Panc1 (cell line): ENCODE measurements at regions of chr5 and their contacts with region 1.

Region 1: DNA sequence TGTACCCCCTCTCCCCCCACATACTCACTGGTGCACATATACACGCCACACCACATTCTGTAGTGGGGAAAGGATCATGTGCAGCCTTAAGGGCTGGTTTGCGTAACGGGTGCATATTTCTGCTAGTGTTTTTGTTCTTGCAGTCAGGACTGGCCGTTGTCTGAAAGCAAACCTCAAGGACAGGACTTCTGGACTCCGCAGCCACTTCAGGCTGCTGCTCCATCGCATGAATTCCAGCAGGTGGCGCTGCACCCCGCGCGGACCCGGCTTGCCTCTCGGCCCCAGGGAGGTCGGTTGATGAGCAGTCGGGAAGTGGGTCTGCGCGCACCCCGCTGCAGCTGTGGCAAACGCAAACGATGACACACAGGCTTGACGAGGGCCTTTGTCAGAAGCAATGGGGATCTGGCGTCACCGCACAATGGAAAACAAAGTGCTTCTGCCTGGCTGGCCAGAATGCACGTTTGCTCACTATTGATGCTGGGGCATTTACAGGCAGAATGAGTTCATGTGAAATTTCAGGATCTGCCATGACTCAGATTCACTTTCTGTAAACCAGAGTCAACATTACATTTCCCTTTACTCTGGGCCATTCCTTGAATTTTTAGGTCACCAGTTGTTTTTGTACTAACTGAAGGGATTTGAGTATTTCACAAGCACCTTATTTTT is 36.3 kb upstream of the GLRX start:
- DNase-seq: peak; percentile 96
- ATAC-seq: peak; percentile 96
- H3K4me3 ChIP-seq: peak overlapping the region; percentile 24 to 50
- H3K27ac ChIP-seq: peak overlapping the region; percentile 44; the same call in 1 of the 2 replicates
- H3K4me1 ChIP-seq: peaks cover 10% of the 10 kb centered on the region; the same call in 1 of the 2 replicates
- H3K27me3 ChIP-seq: no peaks in the 10 kb centered on the region
- CTCF ChIP-seq: peak; percentile 98

Region 2: DNA sequence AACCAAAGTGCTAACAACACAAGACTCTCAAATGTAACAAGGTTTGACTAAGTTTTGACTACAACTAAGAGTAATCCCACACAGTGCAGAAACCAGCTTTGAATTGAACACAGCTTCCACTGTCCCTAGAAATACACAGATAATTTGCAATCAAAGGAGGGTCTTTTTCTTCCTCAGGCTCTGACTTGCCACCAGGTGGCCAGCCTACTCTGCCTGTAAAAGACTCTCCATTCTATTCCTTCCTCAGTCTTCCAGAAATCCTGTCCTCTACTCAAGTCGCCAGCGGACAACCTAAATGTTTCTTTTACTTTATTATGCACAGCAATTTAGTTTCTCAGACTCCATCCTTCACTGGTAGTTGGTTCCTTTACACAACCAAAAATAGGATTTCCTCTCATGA is 541.7 kb before region 1 on chr5:
- CTCF ChIA-PET with region 1: no interaction called
- POLR2A ChIA-PET with region 1: no interaction called
- in situ Hi-C with region 1: no loop called
- intact Hi-C with region 1: no loop called
- DNase-seq: no peak
- ATAC-seq: no peak
- H3K4me3 ChIP-seq: no peak overlapping the region
- H3K27ac ChIP-seq: no peak overlapping the region
- H3K4me1 ChIP-seq: no peaks in the 10 kb centered on the region
- H3K27me3 ChIP-seq: peaks cover 7% of the 10 kb centered on the region
- CTCF ChIP-seq: peak; percentile 31

Region 3: DNA sequence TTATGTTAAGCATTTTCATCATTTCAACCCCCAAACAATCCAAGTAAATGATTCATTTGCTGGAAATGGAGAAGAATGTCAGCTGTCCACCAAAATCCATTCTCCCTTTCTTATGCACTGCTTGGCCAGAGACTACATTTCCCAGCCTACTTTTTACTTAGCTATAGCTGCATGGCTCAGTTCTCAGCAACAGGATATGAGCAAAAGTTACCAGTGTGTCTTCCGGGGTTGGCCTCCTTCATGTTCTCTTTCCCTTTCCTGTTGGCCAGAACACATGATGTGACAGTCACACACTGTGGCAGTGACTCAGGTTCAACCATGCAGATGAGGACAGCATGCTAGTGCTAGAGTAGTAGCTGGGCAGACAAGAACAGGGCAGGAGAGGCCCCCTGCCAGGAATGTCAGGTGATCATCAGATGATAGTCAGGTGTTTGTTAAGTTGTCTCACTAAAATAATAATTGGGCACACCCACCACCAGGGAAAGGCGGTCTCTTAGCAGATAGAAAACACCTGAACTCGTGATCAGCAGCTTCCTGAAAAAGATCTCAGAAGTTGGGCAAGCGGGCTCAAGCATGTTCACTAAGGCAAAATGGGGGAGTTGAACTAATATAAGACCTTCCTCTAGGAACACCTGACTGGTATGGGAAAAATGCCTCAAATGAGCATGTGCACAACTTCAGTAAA is 226.7 kb before region 1 on chr5:
- CTCF ChIA-PET with region 1: no interaction called
- POLR2A ChIA-PET with region 1: interaction called, 10 read pairs
- in situ Hi-C with region 1: no loop called
- intact Hi-C with region 1: no loop called
- DNase-seq: no peak
- ATAC-seq: peak; percentile 49; the same call in 1 of the 2 replicates
- H3K4me3 ChIP-seq: no peak overlapping the region
- H3K27ac ChIP-seq: no peak overlapping the region
- H3K4me1 ChIP-seq: 0 out of 2 replicates have a peak, but pooled peaks cover 4% of the 10 kb centered on the region
- H3K27me3 ChIP-seq: no peaks in the 10 kb centered on the region
- CTCF ChIP-seq: no peak

Region 4: DNA sequence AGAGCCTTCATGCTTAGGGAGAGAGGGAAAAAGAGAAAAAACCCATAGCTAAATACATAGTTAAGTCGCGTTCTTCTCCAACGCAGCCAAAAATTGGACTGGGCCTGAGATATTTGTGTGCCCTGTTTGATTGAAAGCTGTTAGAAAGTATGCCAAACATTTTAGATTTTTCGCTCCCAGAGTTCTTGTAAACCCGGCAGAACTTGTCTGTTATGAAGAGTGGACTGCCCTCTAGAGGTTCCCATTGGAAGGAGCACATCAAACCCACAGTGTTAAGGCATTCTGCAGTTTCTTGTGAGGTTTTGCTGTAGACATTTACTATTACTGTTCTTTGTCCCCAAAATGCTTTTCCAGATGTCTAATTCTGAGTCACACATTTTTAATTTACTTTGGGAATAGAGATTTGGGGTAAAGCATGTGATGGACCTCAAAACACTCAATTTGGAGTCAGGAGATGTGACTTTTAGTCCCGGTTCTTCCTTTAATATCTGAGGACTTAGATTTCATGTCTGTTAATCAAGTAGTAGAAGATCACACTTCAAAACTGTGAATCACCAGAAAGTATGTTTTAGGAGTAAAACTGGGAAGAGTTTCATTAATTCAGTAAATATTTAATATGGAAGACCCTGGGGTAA is 477.7 kb after region 1 on chr5:
- CTCF ChIA-PET with region 1: interaction called, 3 read pairs
- POLR2A ChIA-PET with region 1: no interaction called
- in situ Hi-C with region 1: no loop called
- intact Hi-C with region 1: loop called (anchors 1 kb)
- DNase-seq: peak; percentile 88
- ATAC-seq: peak; percentile 89
- H3K4me3 ChIP-seq: no peak overlapping the region
- H3K27ac ChIP-seq: peak overlapping the region; percentile 80
- H3K4me1 ChIP-seq: peaks cover 23% of the 10 kb centered on the region
- H3K27me3 ChIP-seq: no peaks in the 10 kb centered on the region
- CTCF ChIP-seq: peak; percentile 88

Region 5: GRCh38 chr5:96601811-96602244 is 743.0 kb after region 1 on chr5:
- CTCF ChIA-PET with region 1: no interaction called
- POLR2A ChIA-PET with region 1: no interaction called
- in situ Hi-C with region 1: no loop called
- intact Hi-C with region 1: loop called (anchors 10 kb)
- DNase-seq: peak; percentile 67
- ATAC-seq: peak; percentile 92
- H3K4me3 ChIP-seq: no peak overlapping the region
- H3K27ac ChIP-seq: no peak overlapping the region
- H3K4me1 ChIP-seq: no peaks in the 10 kb centered on the region
- H3K27me3 ChIP-seq: peaks cover 3% of the 10 kb centered on the region
- CTCF ChIP-seq: peak; percentile 84